Gastrocnemius medialis (tissue), 4 donors: ENCODE measurements at regions of chr19 and their contacts with region 1.

Region 1: GRCh38 chr19:39813264-39813993 is 20.5 kb downstream of the DYRK1B start:
- DNase-seq: peak; percentile 76 to 87
- ATAC-seq: peak; percentile 77 to 91
- H3K4me3 ChIP-seq: no peak overlapping the region
- H3K27ac ChIP-seq: peak overlapping the region; percentile 84 to 99 (median 92)
- H3K4me1 ChIP-seq: peaks cover 53 to 59% of the 10 kb centered on the region in 2 donors
- H3K27me3 ChIP-seq: no peaks in the 10 kb centered on the region
- CTCF ChIP-seq: no peak
- POLR2A ChIP-seq: no peak

Region 2: DNA sequence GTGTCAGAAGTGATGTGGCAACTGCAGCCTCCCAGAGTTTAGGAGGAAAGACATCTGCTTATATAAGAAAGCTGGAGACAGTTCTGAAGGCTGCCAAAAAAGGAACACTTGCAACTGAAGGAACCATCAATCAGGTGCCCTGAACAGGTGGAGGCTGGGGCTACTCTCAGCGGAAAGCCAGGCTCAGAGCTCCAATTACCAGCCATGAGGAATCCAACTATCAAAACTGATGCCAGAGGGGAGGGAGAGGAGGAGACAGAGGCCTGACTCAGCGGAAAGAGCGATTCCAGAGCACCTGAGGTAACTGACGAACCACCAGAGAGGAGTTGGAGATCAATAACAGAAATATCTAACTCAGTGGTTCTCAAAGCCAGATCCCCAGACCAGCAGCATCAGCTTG is 10.5 kb before region 1 on chr19:
- in situ Hi-C with region 1: no loop called
- intact Hi-C with region 1: loop called (anchors 1 kb)
- DNase-seq: peak; percentile 85 to 94
- ATAC-seq: peak; percentile 96 to 98
- H3K4me3 ChIP-seq: no peak overlapping the region
- H3K27ac ChIP-seq: peak overlapping the region; percentile 80 to 87 (median 82)
- H3K4me1 ChIP-seq: peaks cover 15 to 33% of the 10 kb centered on the region in 2 donors
- H3K27me3 ChIP-seq: no peaks in the 10 kb centered on the region
- CTCF ChIP-seq: no peak
- POLR2A ChIP-seq: peak in 1 of 2 donors; percentile 32

Region 3: GRCh38 chr19:39858541-39858940 is 45.1 kb after region 1 on chr19:
- in situ Hi-C with region 1: no loop called
- intact Hi-C with region 1: no loop called
- DNase-seq: no peak
- ATAC-seq: no peak
- H3K4me3 ChIP-seq: no peak overlapping the region
- H3K27ac ChIP-seq: no peak overlapping the region
- H3K4me1 ChIP-seq: no peaks in the 10 kb centered on the region
- H3K27me3 ChIP-seq: peaks cover 0 to 3% (median 0%) of the 10 kb centered on the region in 3 donors
- CTCF ChIP-seq: no peak
- POLR2A ChIP-seq: no peak

Region 4: GRCh38 chr19:39870171-39870590 is 56.8 kb after region 1 on chr19:
- in situ Hi-C with region 1: no loop called
- intact Hi-C with region 1: no loop called
- DNase-seq: no peak
- ATAC-seq: no peak
- H3K4me3 ChIP-seq: no peak overlapping the region
- H3K27ac ChIP-seq: no peak overlapping the region
- H3K4me1 ChIP-seq: no peaks in the 10 kb centered on the region
- H3K27me3 ChIP-seq: no peaks in the 10 kb centered on the region
- CTCF ChIP-seq: no peak
- POLR2A ChIP-seq: no peak

Region 5: GRCh38 chr19:41397086-41398049 is 1583.9 kb after region 1 on chr19 and contains the starts of genes BCKDHA and EXOSC5:
- in situ Hi-C with region 1: no loop called
- intact Hi-C with region 1: no loop called
- DNase-seq: peak; percentile 99 to 100
- ATAC-seq: peak; percentile 98 to 99
- H3K4me3 ChIP-seq: peak within 1 kb of the TSS; percentile 89 to 95 (median 92)
- H3K27ac ChIP-seq: peak within 1 kb of the TSS; percentile 90 to 97 (median 94)
- H3K4me1 ChIP-seq: peaks cover 23 to 25% of the 10 kb centered on the region in 2 donors
- H3K27me3 ChIP-seq: no peaks in the 10 kb centered on the region
- CTCF ChIP-seq: peak in 1 of 5 experiments; percentile 12
- POLR2A ChIP-seq: peak; percentile 50 to 67
- total RNA-seq, gene BCKDHA: 80.8 to 115 (median 84.1) TPM
- total RNA-seq, gene EXOSC5: 29.1 to 61.9 (median 40.9) TPM